ENCODE measurements at regions of chr4 and their contacts with region 1.

Region 1: DNA sequence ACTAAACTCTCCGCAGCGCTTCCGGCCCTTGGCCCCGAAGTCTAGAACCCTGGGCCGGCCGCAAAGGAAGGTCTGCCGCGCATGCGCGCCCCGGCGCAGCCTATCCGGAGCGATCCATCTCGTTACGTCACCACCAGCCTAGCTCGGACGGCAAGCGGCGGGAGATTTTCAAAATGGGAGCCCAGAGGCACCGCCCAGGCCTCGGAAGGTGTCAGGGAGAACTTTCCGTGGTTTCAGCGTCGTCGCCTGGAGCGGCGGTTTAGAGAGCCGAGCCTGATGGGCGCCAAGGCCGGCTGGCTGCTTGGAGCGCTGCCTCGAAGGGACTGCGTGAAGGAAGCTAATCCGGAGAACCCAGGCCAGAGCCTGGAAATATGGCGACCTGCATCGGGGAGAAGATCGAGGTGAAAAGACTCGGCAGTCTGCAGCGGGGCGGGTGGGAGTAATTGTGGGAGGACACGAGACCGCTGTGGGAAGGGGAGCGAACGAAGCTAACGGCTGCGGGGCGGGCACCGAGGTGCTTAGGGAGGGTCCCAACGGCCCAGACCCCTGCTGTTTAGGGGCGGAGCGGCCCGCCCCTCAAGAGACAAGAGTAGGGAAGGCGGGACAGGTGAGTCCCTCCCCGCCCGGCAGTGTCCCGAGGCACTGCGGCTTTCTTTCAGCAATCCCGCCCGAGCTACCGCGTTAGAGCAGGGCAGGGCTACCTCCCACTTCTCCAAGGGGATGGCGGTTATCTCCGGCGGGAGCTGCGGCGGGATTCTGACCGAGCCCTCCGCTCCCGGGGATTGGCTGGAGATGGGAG is at the start of gene PLK4:
- DNase-seq: peak; percentile 99
- H3K4me3 ChIP-seq: peak within 1 kb of the TSS; percentile 70 to 93 (median 82)
- H3K27ac ChIP-seq: peak within 1 kb of the TSS; percentile 72 to 84 (median 78)
- H3K4me1 ChIP-seq: peaks cover 9 to 16% (median 14%) of the 10 kb centered on the region in 4 donors
- H3K27me3 ChIP-seq: no peaks in the 10 kb centered on the region
- CTCF ChIP-seq: no peak
- EP300 ChIP-seq: no peak
- POLR2A ChIP-seq: no peak
- total RNA-seq, gene PLK4: 0.78 to 1.7 (median 1.2) TPM

Region 2: GRCh38 chr4:127829014-127829413 is 51.9 kb before region 1 on chr4:
- intact Hi-C with region 1: no loop called
- DNase-seq: no peak
- H3K4me3 ChIP-seq: no peak overlapping the region
- H3K27ac ChIP-seq: no peak overlapping the region
- H3K4me1 ChIP-seq: no peaks in the 10 kb centered on the region
- H3K27me3 ChIP-seq: no peaks in the 10 kb centered on the region
- CTCF ChIP-seq: no peak
- EP300 ChIP-seq: no peak
- POLR2A ChIP-seq: no peak

Region 3: GRCh38 chr4:127920521-127920920 is 39.6 kb after region 1 on chr4:
- intact Hi-C with region 1: no loop called
- DNase-seq: no peak
- H3K4me3 ChIP-seq: no peak overlapping the region
- H3K27ac ChIP-seq: no peak overlapping the region
- H3K4me1 ChIP-seq: no peaks in the 10 kb centered on the region
- H3K27me3 ChIP-seq: no peaks in the 10 kb centered on the region
- CTCF ChIP-seq: no peak
- EP300 ChIP-seq: no peak
- POLR2A ChIP-seq: no peak

Region 4: DNA sequence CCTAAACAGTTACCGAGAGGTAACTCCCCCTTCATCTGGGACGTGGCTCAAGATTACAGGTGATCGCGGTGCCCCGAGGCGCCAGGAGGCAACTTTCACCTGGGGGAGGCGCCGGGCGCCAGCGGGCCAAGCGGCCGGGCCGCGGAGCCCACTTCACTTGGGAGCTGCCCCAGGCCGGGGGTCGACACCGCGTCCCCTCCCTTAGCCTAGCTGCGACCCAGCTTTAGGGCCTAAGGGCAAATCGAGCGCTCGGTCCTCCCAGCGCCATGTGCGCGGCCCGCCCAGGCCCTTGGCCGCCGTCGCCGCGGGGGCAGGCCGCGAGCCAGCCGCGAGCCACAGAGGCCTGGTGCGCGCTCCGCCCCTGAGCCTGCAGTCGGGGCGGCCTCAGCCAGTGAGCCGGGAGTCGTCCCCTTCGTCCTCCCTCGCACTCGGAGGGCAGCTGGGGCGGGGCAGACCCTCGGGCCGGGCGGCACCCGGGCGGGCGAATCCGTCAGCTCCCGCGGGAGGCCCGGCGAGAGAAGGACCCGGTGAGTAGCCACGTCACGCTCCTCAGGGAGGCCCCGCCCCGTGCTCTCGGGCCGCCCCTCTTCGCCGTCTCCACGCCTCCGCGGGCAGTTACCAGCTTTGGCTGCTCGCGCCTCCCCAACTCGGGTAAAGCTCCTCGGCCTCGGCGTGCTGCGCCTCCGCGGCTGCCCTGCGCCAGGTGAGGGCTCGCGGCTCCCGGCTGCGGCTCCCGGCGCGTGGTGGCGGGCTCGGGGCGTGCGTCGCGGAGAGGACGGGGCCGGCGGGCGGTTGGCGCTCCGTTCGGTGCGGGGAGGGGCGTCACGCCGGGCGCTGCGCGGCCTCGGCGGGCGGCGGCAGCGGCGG is 180.0 kb after region 1 on chr4 and contains the start of gene LARP1B:
- intact Hi-C with region 1: loop called (anchors 10 kb)
- DNase-seq: peak; percentile 97
- H3K4me3 ChIP-seq: peak within 1 kb of the TSS; percentile 86 to 97 (median 91)
- H3K27ac ChIP-seq: peak within 1 kb of the TSS; percentile 96 to 98 (median 98)
- H3K4me1 ChIP-seq: peaks cover 9 to 19% (median 13%) of the 10 kb centered on the region in 4 donors
- H3K27me3 ChIP-seq: no peaks in the 10 kb centered on the region
- CTCF ChIP-seq: no peak
- EP300 ChIP-seq: no peak
- POLR2A ChIP-seq: peak; percentile 59
- total RNA-seq, gene LARP1B: 18.9 to 27.5 (median 24.1) TPM

Region 5: GRCh38 chr4:128690016-128690415 is 809.1 kb after region 1 on chr4:
- intact Hi-C with region 1: no loop called
- DNase-seq: no peak
- H3K4me3 ChIP-seq: no peak overlapping the region
- H3K27ac ChIP-seq: no peak overlapping the region
- H3K4me1 ChIP-seq: no peaks in the 10 kb centered on the region
- H3K27me3 ChIP-seq: no peaks in the 10 kb centered on the region
- CTCF ChIP-seq: no peak
- EP300 ChIP-seq: no peak
- POLR2A ChIP-seq: no peak

Region 6: DNA sequence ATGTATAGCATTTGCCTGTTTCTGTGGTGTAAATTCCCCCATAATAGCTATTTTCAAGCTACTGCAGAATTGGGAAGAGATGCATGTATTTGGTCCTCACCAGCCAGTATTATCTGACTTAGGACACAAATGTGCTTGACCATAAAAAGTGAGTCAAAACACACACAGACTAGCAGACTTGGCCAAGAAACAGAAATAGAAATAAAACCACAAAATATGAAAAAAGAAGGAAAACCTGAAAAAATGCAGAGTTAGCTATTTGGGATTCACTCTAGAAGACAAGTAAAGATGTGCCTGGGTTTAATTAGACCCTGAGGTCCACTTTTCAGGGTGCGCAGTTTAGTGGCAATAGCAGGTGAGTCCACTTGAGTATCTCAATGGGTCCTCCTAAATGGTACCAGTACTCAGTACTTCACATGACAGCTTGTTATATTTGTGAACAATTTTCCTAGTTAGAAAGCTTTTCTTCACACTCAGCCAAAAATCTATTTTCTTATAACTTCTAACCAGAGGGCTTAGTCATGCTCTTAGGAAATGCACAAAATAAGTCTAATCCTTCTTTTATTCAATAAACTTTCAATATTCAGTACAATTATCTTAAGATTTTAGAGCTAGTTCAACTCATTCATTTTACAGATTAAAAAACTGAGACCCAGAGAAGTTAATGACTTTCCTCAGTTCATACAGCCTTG is 819.8 kb after region 1 on chr4:
- intact Hi-C with region 1: no loop called
- DNase-seq: no peak
- H3K4me3 ChIP-seq: no peak overlapping the region
- H3K27ac ChIP-seq: no peak overlapping the region
- H3K4me1 ChIP-seq: no peaks in the 10 kb centered on the region
- H3K27me3 ChIP-seq: no peaks in the 10 kb centered on the region
- CTCF ChIP-seq: no peak
- EP300 ChIP-seq: no peak
- POLR2A ChIP-seq: no peak

Measured in esophagus muscularis mucosa (tissue), 4 donors.